Gastrocnemius medialis (tissue), 4 donors: ENCODE measurements at regions of chr3 and their contacts with region 1.

Region 1: GRCh38 chr3:29764603-29765254 is 483.9 kb downstream of the RBMS3 start:
- DNase-seq: no peak
- ATAC-seq: peak in 1 of 2 donors; percentile 50
- H3K4me3 ChIP-seq: no peak overlapping the region
- H3K27ac ChIP-seq: no peak overlapping the region
- H3K4me1 ChIP-seq: peaks cover 10 to 12% of the 10 kb centered on the region in 2 donors
- H3K27me3 ChIP-seq: no peaks in the 10 kb centered on the region
- CTCF ChIP-seq: peak; percentile 15 to 60 (median 35)
- POLR2A ChIP-seq: no peak

Region 2: DNA sequence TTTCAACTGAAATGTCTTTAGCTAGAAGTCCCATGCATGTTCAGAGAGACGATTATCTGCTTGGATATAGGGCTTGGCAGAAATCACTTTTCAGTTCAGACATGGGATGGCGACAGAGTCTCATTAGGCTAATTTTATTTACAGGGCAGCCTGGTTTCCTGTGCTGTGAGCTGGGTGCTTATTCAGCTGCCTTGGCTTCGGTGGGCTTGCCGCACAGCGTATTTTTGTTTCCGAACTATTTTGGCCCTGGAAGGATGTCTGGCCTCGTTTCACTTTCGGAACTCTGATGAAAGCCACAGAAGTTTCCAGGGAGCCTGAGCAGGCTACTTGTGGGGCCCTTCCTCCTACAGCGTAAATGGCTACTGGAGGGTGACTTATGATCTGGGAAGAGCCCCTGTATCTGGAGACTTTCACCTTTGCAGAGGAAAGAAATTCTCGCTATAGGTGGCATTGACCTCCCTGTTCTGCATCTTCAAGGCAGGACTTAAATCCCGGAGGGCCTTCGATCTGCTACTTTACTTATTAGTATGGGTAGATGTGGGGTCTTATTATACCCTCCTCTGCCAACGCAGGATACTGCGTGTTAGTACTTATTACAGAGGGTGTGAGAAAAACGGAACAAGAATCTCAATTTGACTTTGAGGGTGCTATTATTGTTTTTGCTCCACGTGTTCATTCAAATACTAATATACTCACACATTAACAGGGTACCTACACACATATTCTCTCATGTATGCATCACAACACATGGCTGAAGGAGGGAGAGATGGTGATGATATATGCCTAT is 847.8 kb before region 1 on chr3:
- in situ Hi-C with region 1: loop called in 2 of 4 experiments (anchors 25 kb)
- intact Hi-C with region 1: loop called (anchors 10 kb)
- DNase-seq: peak; percentile 32 to 49
- ATAC-seq: peak; percentile 92 to 94
- H3K4me3 ChIP-seq: peak overlapping the region; percentile 45 to 53 (median 50)
- H3K27ac ChIP-seq: peak overlapping the region; percentile 58 to 70 (median 60)
- H3K4me1 ChIP-seq: peaks cover 15 to 16% of the 10 kb centered on the region in 2 donors
- H3K27me3 ChIP-seq: no peaks in the 10 kb centered on the region
- CTCF ChIP-seq: peak in 4 of 5 experiments; percentile 25 to 63 (median 60)
- POLR2A ChIP-seq: no peak

Region 3: DNA sequence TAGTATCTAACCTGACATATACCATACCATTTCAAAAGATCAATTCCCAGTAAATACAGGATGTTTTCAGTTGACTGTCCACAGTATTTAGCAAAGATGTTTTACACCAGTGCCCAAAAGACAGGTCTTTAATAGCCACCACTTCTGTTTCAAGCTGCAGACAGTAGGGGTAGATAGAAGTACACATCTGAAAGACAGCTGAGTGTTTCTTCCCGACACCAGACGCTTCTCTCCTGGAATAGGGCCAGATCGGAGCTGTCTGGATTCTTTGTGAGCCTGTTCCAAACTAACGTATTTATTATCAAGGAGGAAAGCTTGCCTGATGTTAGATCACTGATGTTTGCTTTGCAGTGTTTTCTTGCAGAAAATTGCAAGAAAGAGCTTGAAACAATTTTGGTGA is 619.9 kb before region 1 on chr3:
- in situ Hi-C with region 1: no loop called
- intact Hi-C with region 1: loop called (anchors 10 kb)
- DNase-seq: peak; percentile 14 to 16
- ATAC-seq: peak; percentile 72 to 79
- H3K4me3 ChIP-seq: no peak overlapping the region
- H3K27ac ChIP-seq: no peak overlapping the region
- H3K4me1 ChIP-seq: peaks cover 17 to 20% of the 10 kb centered on the region in 2 donors
- H3K27me3 ChIP-seq: no peaks in the 10 kb centered on the region
- CTCF ChIP-seq: peak in 2 of 5 experiments; percentile 22 to 37
- POLR2A ChIP-seq: no peak

Region 4: GRCh38 chr3:29525254-29525881 is 239.4 kb before region 1 on chr3:
- in situ Hi-C with region 1: loop called in 1 of 4 experiments (anchors 10 kb)
- intact Hi-C with region 1: no loop called
- DNase-seq: peak; percentile 60 to 74
- ATAC-seq: peak; percentile 92 to 93
- H3K4me3 ChIP-seq: no peak overlapping the region
- H3K27ac ChIP-seq: peak overlapping the region; percentile 58 to 75 (median 68)
- H3K4me1 ChIP-seq: peaks cover 18 to 26% of the 10 kb centered on the region in 2 donors
- H3K27me3 ChIP-seq: no peaks in the 10 kb centered on the region
- CTCF ChIP-seq: no peak
- POLR2A ChIP-seq: no peak

Region 5: DNA sequence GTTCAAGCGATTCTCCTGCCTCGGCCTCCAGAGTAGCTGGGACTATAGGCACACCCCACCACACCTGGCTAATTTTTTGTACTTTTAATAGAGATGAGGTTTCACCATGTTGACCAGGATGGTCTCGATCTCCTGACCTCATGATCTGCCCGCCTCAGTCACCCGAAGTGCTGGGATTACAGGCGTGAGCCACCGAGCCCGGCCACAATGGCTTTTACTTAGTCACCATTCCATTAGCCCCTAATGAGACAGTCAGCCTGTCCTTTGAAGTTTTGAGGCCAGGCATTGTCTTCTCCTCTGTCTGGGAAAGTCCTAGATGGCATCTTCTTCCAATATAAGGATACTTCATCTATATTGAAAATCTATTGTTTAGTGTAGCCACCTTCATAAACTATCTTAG is 32.1 kb after region 1 on chr3:
- in situ Hi-C with region 1: no loop called
- intact Hi-C with region 1: no loop called
- DNase-seq: no peak
- ATAC-seq: no peak
- H3K4me3 ChIP-seq: no peak overlapping the region
- H3K27ac ChIP-seq: no peak overlapping the region
- H3K4me1 ChIP-seq: no peaks in the 10 kb centered on the region
- H3K27me3 ChIP-seq: no peaks in the 10 kb centered on the region
- CTCF ChIP-seq: no peak
- POLR2A ChIP-seq: no peak